ENCODE measurements at regions of chr14 and their contacts with region 1.

Region 1: GRCh38 chr14:105086833-105087307 is 21.6 kb upstream of the GPR132 start:
- DNase-seq: peak; percentile 62
- H3K27ac ChIP-seq: peak overlapping the region; percentile 100
- CTCF ChIP-seq: peak; percentile 90

Region 2: GRCh38 chr14:105118656-105119403 is 32.0 kb after region 1 on chr14:
- CTCF ChIA-PET with region 1: interaction called, 10 read pairs
- POLR2A ChIA-PET with region 1: interaction called, 3 read pairs
- DNase-seq: peak; percentile 91
- H3K27ac ChIP-seq: peak overlapping the region; percentile 32; the same call in 1 of the 2 replicates
- CTCF ChIP-seq: no peak

Region 3: GRCh38 chr14:105168979-105169507 is 82.2 kb after region 1 on chr14:
- CTCF ChIA-PET with region 1: interaction called, 99 read pairs
- POLR2A ChIA-PET with region 1: interaction called, 4 read pairs
- DNase-seq: no peak
- H3K27ac ChIP-seq: peak overlapping the region; percentile 99
- CTCF ChIP-seq: peak; percentile 33

Region 4: GRCh38 chr14:105180592-105181548 is 94.0 kb after region 1 on chr14 and contains the start of gene NUDT14:
- CTCF ChIA-PET with region 1: interaction called, 15 read pairs
- POLR2A ChIA-PET with region 1: interaction called, 4 read pairs
- DNase-seq: peak; percentile 91
- H3K27ac ChIP-seq: peak within 1 kb of the TSS; percentile 73
- CTCF ChIP-seq: no peak

Region 5: DNA sequence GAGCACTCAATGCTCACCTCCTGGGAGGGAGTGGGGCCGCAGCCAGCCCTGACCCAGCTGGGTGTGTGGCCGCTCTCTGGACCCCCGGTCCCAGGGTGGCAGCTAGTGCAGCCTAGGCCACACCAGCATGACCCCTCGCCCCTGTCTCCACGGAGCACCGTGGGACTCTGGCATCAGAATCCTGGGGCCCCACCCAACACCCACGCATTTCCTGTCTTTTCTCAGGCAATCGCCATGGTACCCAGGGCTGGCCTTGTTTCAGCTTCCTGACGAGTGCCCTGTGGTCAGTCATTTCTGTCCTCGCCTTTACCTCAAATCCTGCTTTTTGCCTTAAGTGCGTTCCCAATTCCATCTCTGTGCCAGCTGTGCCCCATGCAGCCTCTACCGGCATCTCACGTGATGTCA is 243.6 kb after region 1 on chr14:
- CTCF ChIA-PET with region 1: no interaction called
- POLR2A ChIA-PET with region 1: no interaction called
- DNase-seq: peak; percentile 46
- H3K27ac ChIP-seq: peak overlapping the region; percentile 55
- CTCF ChIP-seq: no peak

Region 6: DNA sequence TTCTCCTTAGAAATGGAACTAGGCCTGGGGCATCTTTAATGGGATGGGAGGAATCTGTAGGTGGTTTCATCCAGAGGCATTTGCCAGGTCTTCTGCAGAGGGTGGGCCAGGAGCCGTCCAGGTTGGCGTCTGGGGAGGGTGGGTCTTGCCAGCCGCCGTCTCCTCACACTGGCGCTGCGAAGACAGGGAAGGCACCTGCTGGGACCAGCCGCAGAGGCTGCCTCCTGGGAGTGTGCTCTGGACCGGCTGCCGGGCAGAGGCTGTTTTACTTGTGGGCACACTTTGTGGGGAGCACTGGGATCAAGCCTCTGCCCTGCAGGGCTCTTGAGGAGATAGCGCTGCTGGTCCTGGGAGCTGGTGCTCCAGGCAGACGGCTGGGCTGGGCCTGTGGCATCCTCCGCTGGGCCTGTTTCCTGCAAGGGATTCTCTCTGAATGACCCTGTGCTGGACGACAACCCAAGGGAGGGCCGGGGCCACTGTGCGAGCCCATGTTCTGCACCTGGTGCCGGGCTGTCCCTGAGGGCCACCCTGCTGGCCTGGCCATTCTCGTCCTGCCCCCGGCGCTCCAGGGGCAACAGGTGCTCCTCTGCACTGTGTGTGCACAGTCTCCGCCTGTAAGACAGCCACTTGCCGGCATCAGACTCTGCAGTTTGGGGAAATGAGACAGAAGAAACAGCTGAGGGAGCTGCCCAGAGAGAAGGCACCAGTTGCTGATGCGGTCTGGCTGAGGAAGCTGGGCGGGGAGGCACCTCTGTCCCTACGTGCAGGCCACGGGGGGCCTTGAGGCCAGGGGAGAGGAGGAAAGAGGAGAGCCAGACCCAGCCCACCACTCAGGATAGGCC is 301.5 kb after region 1 on chr14:
- CTCF ChIA-PET with region 1: no interaction called
- POLR2A ChIA-PET with region 1: no interaction called
- DNase-seq: no peak
- H3K27ac ChIP-seq: 0 out of 2 replicates have a peak overlapping the region, but pooled peaks have one; percentile 13
- CTCF ChIP-seq: no peak